ENCODE measurements at regions of chr1 and their contacts with region 1.

Region 1: GRCh38 chr1:184386312-184387068 is at the start of gene C1orf21:
- DNase-seq: peak; percentile 84
- ATAC-seq: peak; percentile 96
- H3K4me3 ChIP-seq: peak within 1 kb of the TSS; percentile 61
- H3K27ac ChIP-seq: peak within 1 kb of the TSS; percentile 60
- H3K4me1 ChIP-seq: peaks cover 4% of the 10 kb centered on the region; the same call in 1 of the 2 replicates
- H3K27me3 ChIP-seq: peaks cover 7% of the 10 kb centered on the region
- CTCF ChIP-seq: no peak
- POLR2A ChIP-seq: no peak; the same call in 1 of the 2 replicates
- RAD21 ChIP-seq: no peak
- total RNA-seq, gene C1orf21: 9.9 and 15.8 TPM in 2 replicates

Region 2: GRCh38 chr1:183635606-183636333 is 750.7 kb before region 1 on chr1 and contains the start of gene ARPC5:
- CTCF ChIA-PET with region 1: no interaction called
- POLR2A ChIA-PET with region 1: no interaction called
- dilution Hi-C with region 1: no loop called
- in situ Hi-C with region 1: no loop called
- intact Hi-C with region 1: loop called (anchors 10 kb)
- DNase-seq: peak; percentile 98
- ATAC-seq: peak; percentile 85
- H3K4me3 ChIP-seq: peak within 1 kb of the TSS; percentile 85
- H3K27ac ChIP-seq: peak within 1 kb of the TSS; percentile 96
- H3K4me1 ChIP-seq: peaks cover 2% of the 10 kb centered on the region
- H3K27me3 ChIP-seq: no peaks in the 10 kb centered on the region
- CTCF ChIP-seq: no peak
- POLR2A ChIP-seq: peak; percentile 88
- RAD21 ChIP-seq: 0 out of 2 replicates have a peak, but pooled peaks have one; percentile 2
- total RNA-seq, gene ARPC5: 212 and 361 TPM in 2 replicates

Region 3: DNA sequence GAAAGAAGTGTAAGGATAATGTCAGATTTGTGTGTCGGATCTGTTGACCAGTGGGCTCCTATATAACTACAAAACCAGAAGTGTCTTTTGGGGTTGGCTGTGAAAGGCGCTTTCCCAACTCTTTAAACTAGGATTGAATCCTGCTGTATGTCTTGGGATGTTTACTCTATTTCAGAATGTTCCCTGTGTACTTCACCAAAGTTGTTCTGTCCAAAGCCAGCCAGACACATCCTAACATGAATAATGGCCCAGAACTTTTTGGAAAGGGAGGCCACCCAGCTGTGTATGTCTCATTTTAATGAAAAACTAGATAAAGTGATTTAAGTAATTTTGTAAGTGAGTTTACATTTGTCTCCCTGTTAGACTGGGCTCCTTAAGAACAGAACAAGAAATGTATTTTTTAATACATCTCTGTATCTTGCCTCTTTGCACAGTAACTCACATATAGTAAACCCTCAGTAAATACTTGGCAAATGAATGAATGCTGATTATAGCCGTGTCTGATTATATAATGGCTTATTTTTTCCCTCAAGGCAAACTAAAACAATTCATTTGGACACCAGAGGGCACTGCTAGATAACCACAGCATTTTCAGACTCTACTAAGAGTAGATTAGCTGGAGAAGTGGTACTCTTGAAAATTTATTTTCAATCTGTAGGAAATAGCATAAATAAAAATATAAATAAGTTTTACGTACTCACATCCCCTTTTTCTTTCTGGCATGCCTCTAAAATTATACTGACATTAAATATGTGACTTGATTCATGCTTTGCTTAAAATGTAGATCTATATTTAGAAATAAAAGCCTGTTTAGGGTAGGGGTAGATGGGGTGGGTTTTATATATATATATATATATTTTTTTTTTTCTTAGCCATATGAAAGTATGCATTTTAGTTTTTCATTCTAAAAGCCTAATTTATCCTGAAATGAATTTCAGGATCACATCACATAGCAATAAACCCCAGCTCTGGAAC is 311.1 kb before region 1 on chr1:
- CTCF ChIA-PET with region 1: no interaction called
- POLR2A ChIA-PET with region 1: no interaction called
- dilution Hi-C with region 1: no loop called
- in situ Hi-C with region 1: no loop called
- intact Hi-C with region 1: loop called (anchors 1 kb)
- DNase-seq: peak; percentile 75
- ATAC-seq: peak; percentile 87
- H3K4me3 ChIP-seq: no peak overlapping the region
- H3K27ac ChIP-seq: no peak overlapping the region
- H3K4me1 ChIP-seq: peaks cover 3% of the 10 kb centered on the region; the same call in 1 of the 2 replicates
- H3K27me3 ChIP-seq: no peaks in the 10 kb centered on the region
- CTCF ChIP-seq: peak; percentile 91
- POLR2A ChIP-seq: peak; percentile 26; the same call in 1 of the 2 replicates
- RAD21 ChIP-seq: peak; percentile 98

Region 4: DNA sequence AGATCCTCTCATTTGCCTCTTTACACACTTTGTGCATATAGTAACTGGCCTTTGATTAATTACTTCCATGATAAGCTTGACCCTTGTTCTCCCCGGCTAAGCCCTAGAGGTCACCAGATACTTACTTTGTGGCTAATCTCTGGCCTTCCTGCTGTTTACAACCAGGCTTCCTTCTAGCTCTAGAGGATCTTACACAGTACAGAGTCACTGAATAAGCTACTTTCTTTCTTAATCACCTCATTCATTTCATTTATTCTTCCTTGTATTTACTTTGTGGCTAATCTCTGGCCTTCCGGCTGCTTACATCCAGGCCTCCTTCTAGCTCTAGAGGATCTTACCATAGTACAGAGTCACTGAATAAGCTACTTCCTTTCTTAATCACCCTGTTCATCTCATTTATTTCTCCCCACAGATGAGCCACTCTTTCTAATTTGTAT is 144.0 kb before region 1 on chr1:
- CTCF ChIA-PET with region 1: no interaction called
- POLR2A ChIA-PET with region 1: no interaction called
- dilution Hi-C with region 1: no loop called
- in situ Hi-C with region 1: no loop called
- intact Hi-C with region 1: loop called (anchors 5 kb)
- DNase-seq: peak; percentile 91
- ATAC-seq: peak; percentile 98
- H3K4me3 ChIP-seq: no peak overlapping the region
- H3K27ac ChIP-seq: no peak overlapping the region
- H3K4me1 ChIP-seq: 0 out of 2 replicates have a peak, but pooled peaks cover 2% of the 10 kb centered on the region
- H3K27me3 ChIP-seq: peaks cover 41% of the 10 kb centered on the region
- CTCF ChIP-seq: peak; percentile 26; the same call in 1 of the 2 replicates
- POLR2A ChIP-seq: no peak
- RAD21 ChIP-seq: peak; percentile 28; the same call in 1 of the 2 replicates

Region 5: DNA sequence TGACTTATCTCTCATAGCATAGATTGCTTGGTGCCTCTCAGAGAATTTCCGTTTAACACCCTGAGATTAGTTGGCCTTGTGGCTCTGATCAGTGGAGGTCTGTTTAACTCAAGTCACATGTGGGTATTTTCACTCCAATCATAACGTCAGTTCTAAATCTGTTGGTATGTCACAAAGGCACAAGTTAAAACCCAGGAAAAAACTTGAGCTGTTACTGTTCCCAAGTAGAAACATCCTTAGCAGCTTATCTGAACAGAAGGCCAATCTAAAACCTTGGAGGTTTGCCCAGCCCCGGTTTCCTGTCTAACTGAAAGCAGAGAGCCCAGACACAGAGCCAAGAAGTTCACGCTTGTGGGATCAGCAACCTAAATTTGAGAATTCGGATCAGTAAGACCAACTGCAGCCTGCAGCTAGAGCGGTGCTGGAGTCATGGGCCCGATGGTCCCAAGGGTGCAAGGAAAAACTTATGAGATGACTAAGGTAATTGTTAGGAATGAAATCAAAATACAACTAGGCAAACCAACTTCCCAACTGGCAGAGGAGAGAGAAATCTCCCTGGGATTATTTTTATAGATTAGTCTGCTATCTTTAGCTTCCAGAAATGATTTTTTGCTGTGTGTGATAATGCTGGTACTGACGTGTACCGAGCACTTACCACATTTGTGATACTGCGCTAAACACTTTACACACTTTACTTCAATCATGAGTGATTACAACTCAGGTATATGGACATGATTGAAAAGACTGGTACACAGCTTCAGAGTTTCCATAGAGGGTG is 89.8 kb before region 1 on chr1:
- CTCF ChIA-PET with region 1: no interaction called
- POLR2A ChIA-PET with region 1: no interaction called
- dilution Hi-C with region 1: no loop called
- in situ Hi-C with region 1: no loop called
- intact Hi-C with region 1: loop called (anchors 5 kb)
- DNase-seq: peak; percentile 91
- ATAC-seq: peak; percentile 38
- H3K4me3 ChIP-seq: no peak overlapping the region
- H3K27ac ChIP-seq: peak overlapping the region; percentile 13; the same call in 1 of the 2 replicates
- H3K4me1 ChIP-seq: peaks cover 29% of the 10 kb centered on the region
- H3K27me3 ChIP-seq: no peaks in the 10 kb centered on the region
- CTCF ChIP-seq: no peak
- POLR2A ChIP-seq: no peak
- RAD21 ChIP-seq: no peak

Region 6: DNA sequence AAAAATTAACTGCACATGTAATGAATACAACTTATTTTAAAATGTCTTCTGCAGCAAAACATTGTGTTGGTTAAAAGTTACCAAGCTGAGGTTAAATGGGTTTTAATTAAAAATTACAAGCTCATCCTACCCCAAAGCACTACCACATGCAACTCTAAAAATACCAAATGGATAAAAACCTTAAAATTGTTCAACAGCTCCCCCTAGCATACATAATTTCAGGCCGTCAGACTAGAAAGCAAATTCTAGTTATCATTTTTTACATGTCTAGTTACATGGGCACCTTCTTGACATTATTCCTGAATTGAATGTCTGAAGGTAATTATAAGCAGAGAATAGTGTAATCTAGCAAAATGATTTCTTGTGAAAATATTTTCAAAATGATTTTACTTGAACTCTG is 176.8 kb after region 1 on chr1:
- CTCF ChIA-PET with region 1: no interaction called
- POLR2A ChIA-PET with region 1: interaction called, 14 read pairs
- dilution Hi-C with region 1: no loop called
- in situ Hi-C with region 1: no loop called
- intact Hi-C with region 1: loop called (anchors 2 kb)
- DNase-seq: peak; percentile 40
- ATAC-seq: peak; percentile 42; the same call in 1 of the 2 replicates
- H3K4me3 ChIP-seq: no peak overlapping the region
- H3K27ac ChIP-seq: no peak overlapping the region
- H3K4me1 ChIP-seq: peaks cover 3% of the 10 kb centered on the region; the same call in 1 of the 2 replicates
- H3K27me3 ChIP-seq: no peaks in the 10 kb centered on the region
- CTCF ChIP-seq: peak; percentile 66
- POLR2A ChIP-seq: no peak
- RAD21 ChIP-seq: peak; percentile 65